ENCODE measurements at regions of chr16 and their contacts with region 1.

Region 1: DNA sequence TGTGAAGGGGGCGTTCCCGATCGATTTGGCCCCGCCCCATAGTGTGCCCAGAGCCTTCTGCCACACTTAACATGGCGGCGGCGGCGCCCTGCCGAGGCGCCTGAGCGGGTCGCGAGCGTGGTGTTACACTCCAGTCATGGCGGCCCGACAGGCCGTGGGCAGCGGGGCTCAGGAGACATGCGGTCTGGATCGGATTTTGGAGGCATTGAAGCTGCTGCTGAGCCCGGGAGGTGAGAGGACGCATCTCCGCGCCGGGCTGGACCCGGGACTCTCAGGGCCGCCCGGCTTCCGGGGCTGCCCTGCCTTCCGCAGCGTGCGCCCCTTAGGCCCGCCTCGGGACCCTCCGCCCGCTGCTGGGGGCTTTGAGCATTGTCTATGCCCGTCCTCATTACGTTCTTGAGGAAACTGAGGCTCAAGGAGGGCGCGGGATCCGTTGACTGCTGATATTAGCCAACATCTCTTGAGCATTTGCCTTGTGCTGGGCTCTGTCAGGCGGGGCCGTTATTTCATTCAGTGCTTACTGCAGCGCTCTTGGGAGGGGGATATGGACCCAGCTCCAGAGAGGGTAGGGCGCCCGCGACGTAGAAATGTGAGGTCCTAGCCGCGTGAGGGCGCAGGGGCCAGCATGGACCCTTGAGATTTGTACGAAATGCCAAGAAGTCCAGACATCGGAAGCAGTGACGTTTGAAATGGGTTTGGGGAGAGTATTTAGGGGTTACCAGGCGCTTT is at the start of gene TANGO6:
- DNase-seq: peak; percentile 86
- ATAC-seq: peak; percentile 94
- H3K4me3 Mint-ChIP-seq: peak within 1 kb of the TSS; percentile 72
- H3K27ac Mint-ChIP-seq: peak within 1 kb of the TSS; percentile 86; the same call in 1 of the 2 replicates
- H3K4me1 Mint-ChIP-seq: peaks cover 11% of the 10 kb centered on the region
- H3K27me3 Mint-ChIP-seq: no peaks in the 10 kb centered on the region
- CTCF ChIP-seq: no peak
- total RNA-seq, gene TANGO6: 12.0 to 15.6 TPM (median 12.6 TPM) in 3 replicates

Region 2: GRCh38 chr16:68869492-68870088 is 25.9 kb after region 1 on chr16:
- CTCF ChIA-PET with region 1: interaction called, 10 read pairs
- POLR2A ChIA-PET with region 1: no interaction called
- DNase-seq: no peak
- ATAC-seq: peak; percentile 62
- H3K4me3 Mint-ChIP-seq: no peak overlapping the region
- H3K27ac Mint-ChIP-seq: peak overlapping the region; percentile 3
- H3K4me1 Mint-ChIP-seq: peaks cover 14% of the 10 kb centered on the region
- H3K27me3 Mint-ChIP-seq: no peaks in the 10 kb centered on the region
- CTCF ChIP-seq: no peak

Region 3: DNA sequence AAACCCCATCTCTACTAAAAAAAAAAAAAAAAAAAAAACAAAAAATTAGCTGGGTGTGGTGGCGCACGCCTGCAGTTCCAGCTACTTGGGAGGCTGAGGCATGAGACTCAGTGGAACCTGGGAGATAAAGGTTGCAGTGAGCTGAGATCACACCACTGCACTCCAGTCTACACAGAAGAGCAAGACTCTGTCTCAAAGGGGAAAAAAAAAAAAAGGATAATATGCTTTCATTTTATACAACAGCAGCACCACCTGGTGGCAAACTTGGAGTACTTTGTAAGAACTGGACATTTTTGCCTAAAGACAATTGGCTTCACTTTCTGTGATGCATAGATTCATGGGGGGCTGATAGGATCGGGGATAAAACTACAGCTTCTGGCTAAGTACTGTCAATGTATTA is 280.3 kb after region 1 on chr16:
- CTCF ChIA-PET with region 1: interaction called, 18 read pairs
- POLR2A ChIA-PET with region 1: no interaction called
- DNase-seq: peak; percentile 50
- ATAC-seq: peak; percentile 32
- H3K4me3 Mint-ChIP-seq: no peak overlapping the region
- H3K27ac Mint-ChIP-seq: 0 out of 2 replicates have a peak overlapping the region, but pooled peaks have one; percentile 76
- H3K4me1 Mint-ChIP-seq: no peaks in the 10 kb centered on the region
- H3K27me3 Mint-ChIP-seq: no peaks in the 10 kb centered on the region
- CTCF ChIP-seq: peak; percentile 53

Measured in WTC11 (cell line).